Calu3 (cell line): ENCODE measurements at regions of chr10 and their contacts with region 1.

Region 1: DNA sequence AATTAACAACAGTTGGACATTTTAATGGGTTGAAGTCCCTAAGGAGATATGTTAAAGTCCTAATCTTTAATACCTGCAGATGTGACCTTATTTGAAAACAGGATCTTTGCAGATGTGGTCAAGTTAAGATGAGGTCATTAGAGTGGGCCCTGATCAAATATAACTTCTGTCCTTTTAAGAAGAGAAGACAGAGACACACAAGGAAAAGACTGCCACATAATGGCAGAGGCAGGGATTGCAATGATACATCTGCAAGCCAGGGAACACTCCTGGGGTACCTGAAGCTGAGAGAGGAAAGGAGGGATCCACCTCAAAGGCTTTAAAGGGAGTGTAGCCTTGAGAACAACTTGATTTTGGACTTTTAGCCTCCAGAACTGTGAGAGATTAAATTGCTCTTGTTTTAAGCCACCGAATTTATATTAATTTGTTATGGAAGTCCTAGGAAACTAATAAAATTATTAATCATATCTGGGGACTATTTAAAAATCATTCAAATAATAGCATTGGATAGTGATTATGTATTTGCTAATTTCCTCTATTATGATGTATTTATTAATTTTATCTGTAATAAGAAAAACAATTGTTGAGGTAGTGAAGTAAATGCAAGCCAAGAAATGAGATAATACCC is 700.0 kb upstream of the PCDH15 start:
- DNase-seq: peak; percentile 69
- H3K4me3 Mint-ChIP-seq: no peak overlapping the region
- H3K27ac Mint-ChIP-seq: no peak overlapping the region
- H3K4me1 Mint-ChIP-seq: no peaks in the 10 kb centered on the region
- H3K27me3 Mint-ChIP-seq: no peaks in the 10 kb centered on the region
- CTCF ChIP-seq: peak; percentile 56

Region 2: GRCh38 chr10:54993148-54993547 is 507.9 kb before region 1 on chr10:
- CTCF ChIA-PET with region 1: no interaction called
- intact Hi-C with region 1: loop called (anchors 5 kb)
- DNase-seq: no peak
- H3K4me3 Mint-ChIP-seq: no peak overlapping the region
- H3K27ac Mint-ChIP-seq: no peak overlapping the region
- H3K4me1 Mint-ChIP-seq: no peaks in the 10 kb centered on the region
- H3K27me3 Mint-ChIP-seq: no peaks in the 10 kb centered on the region
- CTCF ChIP-seq: no peak

Region 3: GRCh38 chr10:55287346-55287745 is 213.7 kb before region 1 on chr10:
- CTCF ChIA-PET with region 1: interaction called, 5 read pairs
- intact Hi-C with region 1: loop called (anchors 2 kb)
- DNase-seq: no peak
- H3K4me3 Mint-ChIP-seq: no peak overlapping the region
- H3K27ac Mint-ChIP-seq: no peak overlapping the region
- H3K4me1 Mint-ChIP-seq: no peaks in the 10 kb centered on the region
- H3K27me3 Mint-ChIP-seq: no peaks in the 10 kb centered on the region
- CTCF ChIP-seq: no peak

Region 4: GRCh38 chr10:55704944-55705343 is 203.9 kb after region 1 on chr10:
- CTCF ChIA-PET with region 1: no interaction called
- intact Hi-C with region 1: no loop called
- DNase-seq: no peak
- H3K4me3 Mint-ChIP-seq: no peak overlapping the region
- H3K27ac Mint-ChIP-seq: no peak overlapping the region
- H3K4me1 Mint-ChIP-seq: no peaks in the 10 kb centered on the region
- H3K27me3 Mint-ChIP-seq: no peaks in the 10 kb centered on the region
- CTCF ChIP-seq: no peak

Region 5: DNA sequence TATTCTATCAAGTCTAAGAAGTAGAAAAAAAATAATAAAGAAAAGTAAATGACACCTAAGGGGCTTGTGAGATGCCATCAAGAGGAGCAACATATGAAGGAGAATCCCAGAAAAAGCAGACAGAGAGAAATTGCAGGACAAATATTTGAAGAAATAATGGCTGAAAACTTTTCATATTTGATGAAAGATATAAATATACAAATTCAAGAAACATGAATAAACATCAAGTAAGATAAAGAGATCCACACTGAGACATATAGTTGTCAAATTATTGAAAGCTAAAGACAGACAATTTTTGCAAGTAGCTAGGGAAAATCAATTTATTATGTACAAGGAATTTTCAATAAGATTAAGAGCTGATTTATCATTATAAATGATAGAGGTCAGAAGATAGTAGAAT is 302.0 kb after region 1 on chr10:
- CTCF ChIA-PET with region 1: no interaction called
- intact Hi-C with region 1: no loop called
- DNase-seq: no peak
- H3K4me3 Mint-ChIP-seq: no peak overlapping the region
- H3K27ac Mint-ChIP-seq: no peak overlapping the region
- H3K4me1 Mint-ChIP-seq: no peaks in the 10 kb centered on the region
- H3K27me3 Mint-ChIP-seq: no peaks in the 10 kb centered on the region
- CTCF ChIP-seq: no peak